Heart right ventricle (tissue), 16 donors: ENCODE measurements at regions of chr3 and their contacts with region 1.

Region 1: DNA sequence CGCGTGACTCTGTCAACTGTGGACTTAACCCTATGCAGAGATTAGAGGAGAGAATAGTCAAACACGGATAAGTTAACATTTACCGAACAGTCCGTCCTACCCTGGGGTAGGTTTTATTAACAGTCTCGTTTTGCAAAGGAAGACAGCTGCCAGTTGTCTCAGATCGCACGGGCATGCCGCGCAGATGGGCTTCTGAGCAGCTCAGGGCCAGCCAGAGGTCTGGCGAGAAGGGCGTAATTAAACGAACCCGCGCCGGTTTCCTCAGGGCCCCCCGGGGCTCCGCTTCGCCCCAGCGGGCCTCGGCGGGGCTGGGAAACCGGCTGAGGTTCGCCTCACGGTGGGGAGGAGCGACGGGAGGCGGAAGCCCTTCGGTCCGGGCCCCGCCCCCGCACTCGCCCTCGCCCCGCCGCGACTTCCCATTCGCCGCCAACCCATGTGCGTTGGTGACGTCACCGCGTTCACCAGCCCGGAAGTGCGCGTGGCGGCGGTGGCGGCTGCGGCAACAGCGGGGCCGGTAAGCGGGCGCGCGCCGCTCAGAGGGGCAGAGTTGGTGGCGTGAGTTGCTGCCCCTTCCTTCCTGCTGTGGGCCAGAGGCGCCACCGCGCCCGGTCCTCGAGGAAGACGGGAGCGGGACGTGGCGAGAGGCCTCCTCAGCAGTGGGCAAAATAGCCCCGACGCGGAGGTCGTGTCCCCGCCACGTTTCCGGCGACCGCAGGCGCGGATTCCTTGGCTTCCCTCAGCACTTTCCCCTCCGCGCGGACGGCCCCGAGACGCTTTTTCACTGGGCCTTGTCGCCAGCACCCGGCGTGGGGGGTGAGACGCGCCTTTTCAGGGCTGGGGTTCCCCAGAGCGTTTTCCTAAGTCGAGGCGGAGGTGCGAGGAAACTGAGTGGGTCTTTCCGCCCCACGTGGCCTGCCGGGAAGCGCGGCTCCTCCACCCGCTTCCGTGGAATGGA is at the start of gene TRNT1:
- DNase-seq: peak; percentile 96
- ATAC-seq: peak; percentile 99 to 100 (median 100)
- H3K4me3 ChIP-seq: peak within 1 kb of the TSS; percentile 65 to 97 (median 88)
- H3K27ac ChIP-seq: peak within 1 kb of the TSS; percentile 38 to 99 (median 94)
- H3K4me1 ChIP-seq: peaks cover 3 to 34% (median 24%) of the 10 kb centered on the region in 9 donors
- H3K27me3 ChIP-seq: no peaks in the 10 kb centered on the region
- CTCF ChIP-seq: no peak
- total RNA-seq, gene TRNT1: 5.8 to 14.5 (median 10.8) TPM

Region 2: GRCh38 chr3:2898591-2899353 is 228.0 kb before region 1 on chr3:
- intact Hi-C with region 1: no loop called
- DNase-seq: no peak
- ATAC-seq: no peak
- H3K4me3 ChIP-seq: no peak overlapping the region
- H3K27ac ChIP-seq: no peak overlapping the region
- H3K4me1 ChIP-seq: no peaks in the 10 kb centered on the region
- H3K27me3 ChIP-seq: no peaks in the 10 kb centered on the region
- CTCF ChIP-seq: no peak

Region 3: DNA sequence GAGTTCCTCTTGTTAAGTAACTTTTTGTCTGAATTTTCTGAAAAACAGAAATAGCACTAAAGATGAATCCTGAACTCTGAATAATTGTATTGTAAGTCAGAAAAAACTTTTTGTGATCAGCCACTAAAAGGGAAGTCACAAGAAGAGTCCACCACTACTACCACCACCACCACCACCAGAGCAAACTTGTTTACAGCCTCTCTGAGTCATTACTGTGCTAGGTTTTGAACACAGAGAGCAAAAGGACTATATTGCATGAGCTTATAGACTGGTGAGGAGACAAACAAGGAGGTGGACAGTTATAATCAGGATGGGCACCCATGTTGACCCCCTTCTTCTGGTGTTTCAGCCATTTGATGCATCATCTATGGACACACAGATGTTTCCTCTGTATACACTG is 158.3 kb before region 1 on chr3:
- intact Hi-C with region 1: no loop called
- DNase-seq: no peak
- ATAC-seq: no peak
- H3K4me3 ChIP-seq: no peak overlapping the region
- H3K27ac ChIP-seq: no peak overlapping the region
- H3K4me1 ChIP-seq: no peaks in the 10 kb centered on the region
- H3K27me3 ChIP-seq: peaks cover 0 to 3% (median 0%) of the 10 kb centered on the region in 7 donors
- CTCF ChIP-seq: no peak

Region 4: DNA sequence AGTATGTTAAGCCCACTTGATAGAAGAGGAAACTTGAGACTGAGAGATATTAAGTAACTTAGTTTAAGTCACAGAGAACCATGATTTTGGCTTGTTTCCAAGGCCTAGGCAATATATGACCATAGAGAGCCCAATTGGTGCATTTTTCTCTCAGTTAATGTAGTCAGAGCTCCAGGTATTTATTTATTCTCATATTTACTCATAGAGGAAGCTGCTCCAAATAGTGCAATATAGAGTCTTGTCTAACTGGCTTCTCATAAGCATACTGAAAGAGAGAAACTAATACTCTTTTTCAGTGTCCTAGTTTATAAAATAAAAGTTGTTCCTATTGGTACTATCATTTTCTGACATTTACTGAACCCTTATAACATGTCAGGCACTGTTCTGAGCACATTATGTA is 15.2 kb after region 1 on chr3:
- intact Hi-C with region 1: no loop called
- DNase-seq: no peak
- ATAC-seq: no peak
- H3K4me3 ChIP-seq: no peak overlapping the region
- H3K27ac ChIP-seq: no peak overlapping the region
- H3K4me1 ChIP-seq: no peaks in the 10 kb centered on the region
- H3K27me3 ChIP-seq: no peaks in the 10 kb centered on the region
- CTCF ChIP-seq: no peak

Region 5: GRCh38 chr3:3179407-3180094 is 52.8 kb after region 1 on chr3 and contains the start of gene CRBN:
- intact Hi-C with region 1: loop called in 2 of 10 experiments (anchors 2 to 5 kb)
- DNase-seq: peak; percentile 88
- ATAC-seq: peak; percentile 98 to 99 (median 99)
- H3K4me3 ChIP-seq: peak within 1 kb of the TSS; percentile 78 to 99 (median 95)
- H3K27ac ChIP-seq: peak within 1 kb of the TSS; percentile 61 to 95 (median 82)
- H3K4me1 ChIP-seq: peaks cover 9 to 52% (median 35%) of the 10 kb centered on the region in 9 donors
- H3K27me3 ChIP-seq: no peaks in the 10 kb centered on the region
- CTCF ChIP-seq: peak; percentile 97 to 100 (median 99)
- total RNA-seq, gene CRBN: 34.8 to 63.2 (median 53.8) TPM

Region 6: DNA sequence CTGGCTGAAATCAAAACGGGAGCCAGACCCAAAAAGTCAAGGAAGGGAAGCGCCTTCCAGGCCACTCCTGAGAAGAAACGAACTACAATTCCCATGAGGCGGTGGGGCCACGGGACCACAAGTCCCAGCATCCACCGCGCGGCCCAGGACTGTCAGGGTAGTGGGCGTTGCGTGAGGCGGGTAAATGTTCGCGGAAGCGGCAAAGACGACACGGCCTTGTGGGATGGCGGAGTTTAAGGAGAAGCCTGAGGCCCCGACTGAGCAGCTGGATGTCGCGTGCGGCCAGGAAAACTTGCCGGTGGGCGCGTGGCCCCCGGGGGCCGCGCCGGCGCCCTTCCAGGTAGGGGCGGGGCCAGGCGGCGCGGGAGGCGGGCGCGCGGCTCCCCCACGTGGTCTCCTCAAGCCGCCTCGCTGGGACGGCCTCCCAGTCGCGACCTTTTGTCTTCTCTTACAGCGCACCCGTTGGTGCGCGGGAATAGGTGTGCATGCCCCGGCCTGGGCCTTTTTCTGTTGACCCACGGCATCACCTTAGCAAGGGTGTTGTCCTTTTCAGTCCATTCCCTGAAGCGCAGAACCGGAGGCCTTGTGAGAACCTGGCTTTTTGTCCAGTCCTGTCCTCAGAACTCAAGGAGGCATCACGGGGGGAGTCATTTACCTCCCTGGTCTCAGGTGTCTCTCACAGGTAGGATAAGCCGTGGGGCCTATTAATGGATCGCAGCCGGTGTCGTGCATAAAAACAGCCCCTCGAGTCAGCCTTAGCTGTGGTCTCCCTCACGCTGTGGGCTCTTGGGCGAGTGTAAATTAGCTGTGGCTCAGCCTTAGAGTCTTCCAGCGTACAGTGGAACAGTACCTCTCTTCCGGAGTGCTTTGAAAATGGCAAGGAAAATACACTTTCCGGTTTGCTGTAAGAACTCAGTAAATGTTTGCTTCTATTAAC is 1176.7 kb after region 1 on chr3 and contains the start of gene SETMAR:
- intact Hi-C with region 1: loop called in 1 of 10 experiments (anchors 10 kb)
- DNase-seq: peak; percentile 90 to 92
- ATAC-seq: peak; percentile 95 to 97 (median 97)
- H3K4me3 ChIP-seq: peak within 1 kb of the TSS; percentile 44 to 82 (median 73)
- H3K27ac ChIP-seq: peak within 1 kb of the TSS; percentile 70 to 97 (median 91)
- H3K4me1 ChIP-seq: peaks cover 0 to 50% (median 39%) of the 10 kb centered on the region in 9 donors
- H3K27me3 ChIP-seq: no peaks in the 10 kb centered on the region
- CTCF ChIP-seq: no peak
- total RNA-seq, gene SETMAR: 11.2 to 16.8 (median 12.7) TPM